PC-9 (cell line): ENCODE measurements at regions of chr5 and their contacts with region 1.

Region 1: GRCh38 chr5:116068028-116068632 is 16.7 kb upstream of the COMMD10 start:
- DNase-seq: peak in 1 of 2 experiments; percentile 11
- H3K4me3 ChIP-seq: no peak overlapping the region
- H3K27ac ChIP-seq: no peak overlapping the region
- H3K4me1 ChIP-seq: no peaks in the 10 kb centered on the region
- H3K27me3 ChIP-seq: no peaks in the 10 kb centered on the region
- CTCF ChIP-seq: peak; percentile 93

Region 2: GRCh38 chr5:115098041-115098702 is 970.0 kb before region 1 on chr5:
- CTCF ChIA-PET with region 1: no interaction called
- POLR2A ChIA-PET with region 1: no interaction called
- intact Hi-C with region 1: loop called (anchors 1 kb)
- DNase-seq: peak; percentile 24 to 38
- H3K4me3 ChIP-seq: no peak overlapping the region
- H3K27ac ChIP-seq: no peak overlapping the region
- H3K4me1 ChIP-seq: no peaks in the 10 kb centered on the region
- H3K27me3 ChIP-seq: no peaks in the 10 kb centered on the region
- CTCF ChIP-seq: peak; percentile 82

Region 3: GRCh38 chr5:115634343-115635132 is 433.6 kb before region 1 on chr5:
- CTCF ChIA-PET with region 1: no interaction called
- POLR2A ChIA-PET with region 1: no interaction called
- intact Hi-C with region 1: loop called (anchors 5 kb)
- DNase-seq: peak; percentile 53 to 82
- H3K4me3 ChIP-seq: peak overlapping the region; percentile 37; the same call in 1 of the 2 replicates
- H3K27ac ChIP-seq: peak overlapping the region; percentile 11; the same call in 1 of the 2 replicates
- H3K4me1 ChIP-seq: peaks cover 7% of the 10 kb centered on the region
- H3K27me3 ChIP-seq: no peaks in the 10 kb centered on the region
- CTCF ChIP-seq: peak; percentile 86

Region 4: DNA sequence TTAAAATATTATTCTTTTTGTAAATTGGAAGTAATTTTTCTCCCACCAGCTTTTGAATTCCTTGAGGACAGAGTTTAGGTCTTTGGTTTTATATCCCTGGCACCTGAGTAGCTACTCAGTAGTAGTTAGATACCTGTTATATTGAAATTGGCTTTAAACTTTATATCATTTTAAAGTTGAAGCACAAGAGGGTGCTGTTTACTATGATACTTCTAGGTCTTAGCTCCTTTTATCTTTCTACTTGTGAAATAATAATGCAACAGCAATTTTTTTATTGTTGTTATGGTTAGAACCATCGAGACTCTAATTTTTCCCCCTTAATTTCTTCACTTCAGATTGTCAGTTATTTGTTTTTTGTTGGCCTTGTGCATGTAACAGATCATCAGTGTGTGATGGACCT is 180.1 kb before region 1 on chr5:
- CTCF ChIA-PET with region 1: interaction called, 3 read pairs
- POLR2A ChIA-PET with region 1: no interaction called
- intact Hi-C with region 1: loop called (anchors 1 kb)
- DNase-seq: no peak
- H3K4me3 ChIP-seq: no peak overlapping the region
- H3K27ac ChIP-seq: no peak overlapping the region
- H3K4me1 ChIP-seq: no peaks in the 10 kb centered on the region
- H3K27me3 ChIP-seq: no peaks in the 10 kb centered on the region
- CTCF ChIP-seq: peak; percentile 66

Region 5: GRCh38 chr5:116032094-116032517 is 36.0 kb before region 1 on chr5 and contains the start of gene ARL14EPL:
- CTCF ChIA-PET with region 1: no interaction called
- POLR2A ChIA-PET with region 1: no interaction called
- intact Hi-C with region 1: loop called (anchors 5 kb)
- DNase-seq: peak; percentile 58 to 74
- H3K4me3 ChIP-seq: peak within 1 kb of the TSS; percentile 42; the same call in 1 of the 2 replicates
- H3K27ac ChIP-seq: peak within 1 kb of the TSS; percentile 81
- H3K4me1 ChIP-seq: peaks cover 19% of the 10 kb centered on the region
- H3K27me3 ChIP-seq: no peaks in the 10 kb centered on the region
- CTCF ChIP-seq: peak; percentile 39; the same call in 1 of the 2 replicates
- total RNA-seq, gene ARL14EPL: 0.37 TPM in 1 of 2 replicates, not detected in the other